ENCODE measurements at regions of chr7 and their contacts with region 1.

Region 1: GRCh38 chr7:80392229-80393169 is 119.4 kb downstream of the GNAT3 start:
- DNase-seq: no peak
- ATAC-seq: peak; percentile 60; the same call in 1 of the 2 replicates
- H3K4me3 ChIP-seq: no peak overlapping the region
- H3K27ac ChIP-seq: no peak overlapping the region
- H3K4me1 ChIP-seq: no peaks in the 10 kb centered on the region
- H3K27me3 ChIP-seq: no peaks in the 10 kb centered on the region; the same call in 1 of the 2 replicates
- CTCF ChIP-seq: peak; percentile 55; the same call in 1 of the 2 replicates

Region 2: DNA sequence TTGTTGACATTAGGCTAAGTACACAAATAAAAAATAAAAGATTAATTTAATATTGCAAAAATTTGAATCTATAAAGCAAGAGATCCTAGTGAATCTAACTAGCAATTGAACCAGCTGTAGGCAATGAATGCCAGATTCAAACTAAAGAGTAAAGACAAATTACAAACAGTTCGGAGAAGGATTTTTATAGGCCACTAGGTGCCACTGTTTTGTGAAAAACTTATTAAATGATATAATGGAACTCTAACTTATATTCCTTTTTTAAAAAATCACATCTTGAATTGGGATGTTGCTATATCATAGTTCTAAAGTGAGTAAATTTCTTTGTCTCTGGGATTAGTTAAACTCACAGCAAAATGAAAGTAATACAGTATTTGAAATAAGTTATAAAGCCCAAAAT is 297.0 kb before region 1 on chr7:
- CTCF ChIA-PET with region 1: no interaction called
- POLR2A ChIA-PET with region 1: no interaction called
- in situ Hi-C with region 1: no loop called
- intact Hi-C with region 1: loop called (anchors 10 kb)
- DNase-seq: no peak
- ATAC-seq: no peak
- H3K4me3 ChIP-seq: no peak overlapping the region
- H3K27ac ChIP-seq: no peak overlapping the region
- H3K4me1 ChIP-seq: no peaks in the 10 kb centered on the region
- H3K27me3 ChIP-seq: no peaks in the 10 kb centered on the region
- CTCF ChIP-seq: peak; percentile 58; the same call in 1 of the 2 replicates

Region 3: DNA sequence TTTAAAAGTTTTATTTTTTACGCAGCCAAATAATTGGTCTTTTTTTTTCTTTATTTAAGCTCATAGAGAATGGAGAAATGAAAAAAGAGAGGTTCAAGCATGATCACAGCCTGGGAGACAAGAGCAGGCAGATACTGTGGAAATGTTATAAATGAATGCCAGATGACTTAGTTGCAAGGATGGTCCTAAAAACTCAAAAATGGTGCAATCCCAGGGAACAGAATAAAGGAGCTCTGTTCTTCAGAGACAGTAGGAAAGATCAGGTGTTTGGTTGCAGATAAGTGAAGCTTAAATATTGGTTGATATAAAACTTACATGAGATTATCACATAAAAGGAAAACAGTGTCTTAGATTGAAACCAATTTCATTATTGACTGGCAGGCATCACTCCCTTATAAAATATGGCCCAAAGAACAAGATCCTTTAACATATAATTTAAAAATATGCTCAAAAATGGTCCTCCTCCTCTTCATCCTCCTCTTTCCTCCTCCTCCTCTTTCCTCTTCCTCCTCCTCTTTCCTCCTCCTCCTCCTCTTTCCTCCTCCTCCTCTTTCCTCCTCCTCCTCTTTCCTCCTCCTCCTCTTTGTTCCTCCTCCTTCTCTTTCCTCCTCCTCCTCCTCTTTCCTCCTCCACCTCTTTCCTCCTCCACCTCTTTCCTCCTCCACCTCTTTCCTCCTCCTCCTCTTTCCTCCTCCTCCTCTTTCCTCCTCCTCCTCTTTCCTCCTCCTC is 100.8 kb after region 1 on chr7:
- CTCF ChIA-PET with region 1: no interaction called
- POLR2A ChIA-PET with region 1: interaction called, 11 read pairs
- in situ Hi-C with region 1: no loop called
- intact Hi-C with region 1: no loop called
- DNase-seq: no peak
- ATAC-seq: no peak
- H3K4me3 ChIP-seq: no peak overlapping the region
- H3K27ac ChIP-seq: no peak overlapping the region
- H3K4me1 ChIP-seq: no peaks in the 10 kb centered on the region
- H3K27me3 ChIP-seq: no peaks in the 10 kb centered on the region
- CTCF ChIP-seq: no peak

Region 4: DNA sequence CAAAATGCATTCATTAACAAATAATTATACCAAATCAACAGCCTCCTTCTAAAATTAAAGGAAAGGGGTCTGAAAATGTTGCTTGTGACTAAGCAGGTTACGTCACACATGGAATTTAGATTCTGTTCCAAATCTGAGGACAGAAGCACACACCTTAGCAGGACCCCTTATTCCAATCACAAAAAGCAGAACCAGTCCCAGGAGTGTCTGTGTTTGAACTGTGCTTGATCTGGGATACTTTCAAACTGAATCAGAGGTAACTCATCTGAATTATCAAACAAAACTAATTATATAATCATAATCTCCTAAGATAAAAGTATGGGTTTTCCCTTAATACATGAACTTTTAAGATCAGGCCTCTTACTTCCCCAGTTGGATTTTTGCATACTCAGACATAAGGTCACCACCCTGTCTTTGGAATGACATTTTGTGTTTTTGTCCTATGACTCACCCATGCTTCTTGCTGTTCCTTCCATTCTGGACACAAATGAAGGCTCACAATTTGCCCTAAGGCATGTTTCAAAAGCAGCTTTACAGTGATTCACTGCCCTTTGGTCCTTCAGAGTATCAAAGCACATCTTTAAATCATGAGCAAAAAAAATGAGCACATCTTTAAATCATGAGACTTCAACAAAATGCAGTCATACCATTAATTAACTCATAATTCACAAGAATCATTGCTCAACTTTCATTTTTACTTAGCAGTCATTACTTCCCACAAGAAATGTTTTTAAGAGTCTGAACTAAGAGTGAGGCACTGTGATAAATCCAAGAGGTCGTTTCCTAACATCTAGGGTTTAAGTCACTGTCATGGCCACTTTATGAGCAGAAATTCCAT is 490.9 kb after region 1 on chr7:
- CTCF ChIA-PET with region 1: no interaction called
- POLR2A ChIA-PET with region 1: no interaction called
- in situ Hi-C with region 1: no loop called
- intact Hi-C with region 1: no loop called
- DNase-seq: peak; percentile 97
- ATAC-seq: peak; percentile 90
- H3K4me3 ChIP-seq: no peak overlapping the region
- H3K27ac ChIP-seq: peak overlapping the region; percentile 92
- H3K4me1 ChIP-seq: peaks cover 87% of the 10 kb centered on the region
- H3K27me3 ChIP-seq: no peaks in the 10 kb centered on the region
- CTCF ChIP-seq: no peak

Measured in Panc1 (cell line).